ENCODE measurements at regions of chr1 and their contacts with region 1.

Region 1: DNA sequence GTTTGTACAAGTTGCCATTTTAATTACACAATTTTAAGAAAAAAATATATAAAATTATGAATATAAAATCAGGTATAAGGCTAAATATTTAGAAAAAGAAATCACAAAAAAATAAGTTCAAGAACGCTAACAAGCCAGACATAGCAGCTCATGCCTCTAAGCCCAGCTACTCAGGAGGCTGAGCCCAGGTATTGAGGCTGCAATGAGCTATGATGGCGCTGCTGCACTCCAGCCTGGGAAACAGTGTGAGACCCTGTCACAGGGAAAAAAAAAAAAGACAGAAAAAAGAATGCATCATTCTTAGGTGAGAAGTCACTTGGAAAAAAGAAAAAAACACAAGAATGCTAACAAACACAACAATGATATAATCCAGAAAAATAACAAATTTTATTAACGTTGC is 112.3 kb upstream of the PRDX6 start:
- DNase-seq: no peak
- H3K4me3 ChIP-seq: no peak overlapping the region
- H3K27ac ChIP-seq: no peak overlapping the region
- H3K4me1 ChIP-seq: no peaks in the 10 kb centered on the region
- H3K27me3 ChIP-seq: no peaks in the 10 kb centered on the region
- CTCF ChIP-seq: no peak

Region 2: GRCh38 chr1:173400387-173400995 is 35.7 kb after region 1 on chr1:
- CTCF ChIA-PET with region 1: no interaction called
- dilution Hi-C with region 1: loop called (anchors 5 kb)
- in situ Hi-C with region 1: no loop called
- intact Hi-C with region 1: no loop called
- DNase-seq: no peak
- H3K4me3 ChIP-seq: no peak overlapping the region
- H3K27ac ChIP-seq: no peak overlapping the region
- H3K4me1 ChIP-seq: peaks cover 6% of the 10 kb centered on the region
- H3K27me3 ChIP-seq: no peaks in the 10 kb centered on the region
- CTCF ChIP-seq: no peak

Measured in mammary epithelial cell (primary cell).